ENCODE measurements at regions of chr2 and their contacts with region 1.

Region 1: DNA sequence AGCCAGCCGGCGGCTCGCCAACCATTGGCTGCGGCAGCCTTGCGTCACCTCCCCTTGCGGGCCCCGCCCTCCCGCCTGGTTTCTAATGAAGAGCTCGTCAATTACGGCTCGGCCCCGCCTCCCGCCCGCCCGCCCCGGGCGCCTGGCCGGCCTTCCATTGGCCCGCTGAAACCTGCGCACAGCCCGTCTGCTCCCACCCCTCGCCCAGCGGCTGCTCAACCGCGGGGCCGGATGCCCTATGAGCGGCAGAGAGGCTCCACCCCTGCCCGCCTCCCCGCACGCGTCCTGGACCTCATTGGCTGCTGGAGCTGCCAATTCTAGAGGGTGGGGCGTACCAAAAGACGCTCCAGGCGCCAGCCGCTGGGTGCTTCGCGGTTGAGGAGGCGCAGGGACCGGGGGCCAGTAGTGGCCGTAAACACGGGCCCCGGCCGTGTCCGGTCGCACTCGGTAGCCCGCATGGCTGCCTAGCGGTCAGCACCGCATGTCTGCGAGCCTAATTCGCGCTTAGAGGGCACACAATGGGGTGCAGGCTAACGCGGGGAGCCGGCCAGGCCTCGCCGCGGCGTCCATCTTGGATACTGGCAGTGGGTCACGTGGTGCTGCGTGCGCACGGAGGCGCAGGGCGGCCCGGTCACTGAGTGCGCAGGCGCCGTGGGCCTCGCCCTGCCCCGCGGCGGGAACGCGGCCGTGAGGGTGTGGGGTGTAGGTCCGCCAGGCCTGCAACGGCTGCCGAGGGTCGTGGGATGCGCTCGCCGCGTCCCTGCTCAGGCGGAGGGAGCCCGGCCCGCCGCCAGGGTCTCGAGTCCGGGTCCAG is 454 bp upstream of the HDAC4 start:
- DNase-seq: peak; percentile 100
- H3K4me3 Mint-ChIP-seq: peak overlapping the region; percentile 93
- H3K27ac Mint-ChIP-seq: peak overlapping the region; percentile 99
- H3K4me1 Mint-ChIP-seq: peaks cover 45% of the 10 kb centered on the region
- H3K27me3 Mint-ChIP-seq: peaks cover 20% of the 10 kb centered on the region

Region 2: DNA sequence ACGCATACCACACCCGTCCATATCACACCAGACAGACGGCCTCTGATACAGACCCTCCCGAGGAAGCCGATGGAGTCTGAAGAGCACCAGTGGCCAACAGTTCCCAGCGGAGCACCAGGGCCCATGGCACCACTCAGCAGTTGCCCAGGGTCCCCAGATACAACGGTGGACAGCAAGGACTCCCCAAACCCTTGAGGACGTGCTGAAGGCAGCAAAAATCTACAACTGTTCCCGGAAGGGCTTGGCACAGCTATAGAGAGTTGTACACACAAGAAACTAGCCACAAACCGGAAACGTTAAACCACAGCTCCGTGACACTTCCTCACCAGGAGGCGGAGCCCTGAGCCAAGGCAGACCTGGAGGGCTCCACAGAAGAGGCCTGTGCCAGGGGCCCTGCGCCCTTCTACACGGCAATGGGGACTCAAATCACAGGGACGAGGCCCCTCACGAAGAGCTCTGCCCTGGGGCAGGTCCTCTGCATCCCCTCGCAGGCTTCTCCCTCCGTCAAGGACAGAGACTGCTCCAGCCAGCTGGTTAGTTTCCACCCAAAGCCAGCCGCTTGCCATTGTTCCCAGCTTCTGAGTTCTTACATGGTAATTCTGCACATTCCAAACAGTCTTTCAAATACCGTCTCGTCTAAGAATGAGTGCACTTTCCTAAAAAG is 133.9 kb before region 1 on chr2:
- intact Hi-C with region 1: loop called (anchors 2 kb)
- DNase-seq: peak; percentile 98
- H3K4me3 Mint-ChIP-seq: peak overlapping the region; percentile 93
- H3K27ac Mint-ChIP-seq: peak overlapping the region; percentile 84
- H3K4me1 Mint-ChIP-seq: peaks cover 76% of the 10 kb centered on the region
- H3K27me3 Mint-ChIP-seq: peaks cover 12% of the 10 kb centered on the region

Region 3: DNA sequence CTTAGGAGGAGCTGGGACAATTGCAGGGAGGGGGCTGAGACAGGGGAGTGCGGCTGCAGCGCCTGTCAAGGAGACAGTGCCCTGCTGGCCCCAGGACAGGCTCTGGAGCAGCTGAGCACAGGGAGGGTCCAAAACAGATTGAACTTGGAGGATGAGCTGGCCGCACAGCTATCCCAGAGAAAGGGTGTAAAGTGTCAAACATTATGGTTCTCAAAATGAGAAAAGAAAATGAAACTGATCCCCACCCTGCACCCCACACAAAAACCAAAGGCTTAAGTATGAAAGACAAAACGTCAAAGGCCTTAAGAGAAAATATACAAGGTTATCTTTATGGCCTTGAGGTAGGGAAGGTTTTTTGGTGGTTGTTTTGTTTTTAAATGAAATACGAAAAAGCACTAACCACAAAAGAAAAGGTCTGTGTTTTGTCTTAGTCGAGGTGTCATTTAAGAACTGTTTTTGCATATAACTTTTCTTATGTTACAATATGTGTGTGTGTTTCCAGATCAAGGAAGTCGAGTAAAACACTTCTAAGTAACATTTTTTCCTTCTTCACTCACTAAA is 112.2 kb before region 1 on chr2:
- intact Hi-C with region 1: loop called (anchors 2 kb)
- DNase-seq: peak; percentile 88
- H3K4me3 Mint-ChIP-seq: peak overlapping the region; percentile 88
- H3K27ac Mint-ChIP-seq: peak overlapping the region; percentile 97
- H3K4me1 Mint-ChIP-seq: peaks cover 70% of the 10 kb centered on the region
- H3K27me3 Mint-ChIP-seq: peaks cover 10% of the 10 kb centered on the region

Region 4: DNA sequence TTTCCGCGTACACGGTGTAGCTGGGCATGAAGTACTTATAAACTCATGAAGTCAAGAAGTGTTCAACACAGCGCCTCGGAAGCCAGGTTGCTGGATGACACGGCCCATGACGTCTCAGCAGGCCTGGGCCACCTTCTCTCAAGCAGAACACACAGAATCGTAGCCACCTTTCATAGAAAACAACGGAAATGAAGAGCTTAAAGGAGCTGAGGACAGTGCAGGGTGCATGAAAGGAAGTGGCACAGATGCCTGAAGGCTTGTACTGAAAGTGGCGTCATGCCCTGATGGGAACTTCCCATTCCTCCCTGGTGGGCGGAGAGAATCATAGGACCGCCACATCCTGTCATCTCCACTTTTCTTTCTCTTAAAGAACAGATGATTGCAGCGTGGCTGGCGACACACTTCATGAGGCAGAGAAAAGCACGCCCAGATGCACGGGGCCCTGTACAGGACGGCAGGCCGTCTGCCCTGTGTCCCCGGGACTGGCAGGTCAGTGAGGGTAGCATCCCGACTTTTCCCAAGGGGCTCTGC is 31.6 kb before region 1 on chr2:
- intact Hi-C with region 1: loop called (anchors 1 kb)
- DNase-seq: peak; percentile 95
- H3K4me3 Mint-ChIP-seq: no peak overlapping the region
- H3K27ac Mint-ChIP-seq: no peak overlapping the region
- H3K4me1 Mint-ChIP-seq: peaks cover 11% of the 10 kb centered on the region
- H3K27me3 Mint-ChIP-seq: no peaks in the 10 kb centered on the region

Region 5: DNA sequence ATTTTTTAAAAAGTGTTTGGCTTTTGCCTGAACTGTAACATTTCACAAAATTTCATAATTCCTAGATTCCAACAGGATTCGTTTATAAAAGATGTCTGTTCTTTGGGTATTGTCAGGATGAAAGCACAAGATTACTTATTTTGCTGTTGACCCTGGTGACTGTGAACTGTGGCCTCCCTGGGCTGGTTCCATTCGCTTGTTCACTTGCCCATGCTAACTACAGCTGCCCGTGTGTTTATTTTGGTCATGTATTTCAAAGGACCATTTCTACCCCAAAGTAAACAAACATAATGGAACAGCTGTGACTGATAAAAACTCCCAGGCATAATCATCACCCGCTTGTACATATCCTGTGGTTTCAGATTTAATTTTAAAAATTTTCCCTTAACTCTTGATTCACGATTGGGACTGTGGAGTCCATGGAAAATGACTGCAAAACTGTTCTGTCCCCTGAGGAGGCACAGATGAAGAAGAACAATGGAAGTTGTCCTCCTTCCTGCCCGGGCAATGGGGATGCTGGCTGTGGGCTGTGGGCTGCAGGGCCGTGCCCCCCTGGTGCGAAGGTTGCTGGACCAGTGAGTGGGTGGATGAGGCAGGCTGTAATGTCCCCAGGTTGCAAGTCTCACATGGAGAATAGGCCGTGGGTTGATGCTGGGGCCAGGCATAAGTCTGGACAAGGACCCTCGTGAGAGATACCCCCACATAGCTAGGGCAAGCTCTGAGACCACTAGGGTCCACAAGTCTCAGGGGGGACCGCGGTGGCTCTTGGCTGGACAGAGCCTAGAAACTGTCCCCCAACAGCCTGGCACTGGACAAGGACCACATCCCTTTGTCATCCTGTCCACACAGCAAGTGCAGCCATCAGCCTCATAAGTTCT is 28.4 kb after region 1 on chr2:
- intact Hi-C with region 1: no loop called
- DNase-seq: no peak
- H3K4me3 Mint-ChIP-seq: no peak overlapping the region
- H3K27ac Mint-ChIP-seq: no peak overlapping the region
- H3K4me1 Mint-ChIP-seq: peaks cover 8% of the 10 kb centered on the region
- H3K27me3 Mint-ChIP-seq: peaks cover 25% of the 10 kb centered on the region